Brain microvascular endothelial cell (primary cell): ENCODE measurements at regions of chr4 and their contacts with region 1.

Region 1: GRCh38 chr4:156790866-156791265 is 180.7 kb downstream of the PDGFC start:
- DNase-seq: peak; percentile 59
- H3K4me3 ChIP-seq: no peak overlapping the region
- H3K27ac ChIP-seq: no peak overlapping the region
- H3K27me3 ChIP-seq: no peaks in the 10 kb centered on the region
- CTCF ChIP-seq: no peak

Region 2: GRCh38 chr4:156628858-156629257 is 162.0 kb before region 1 on chr4:
- in situ Hi-C with region 1: no loop called
- DNase-seq: no peak
- H3K4me3 ChIP-seq: no peak overlapping the region
- H3K27ac ChIP-seq: no peak overlapping the region
- H3K27me3 ChIP-seq: no peaks in the 10 kb centered on the region
- CTCF ChIP-seq: no peak

Region 3: DNA sequence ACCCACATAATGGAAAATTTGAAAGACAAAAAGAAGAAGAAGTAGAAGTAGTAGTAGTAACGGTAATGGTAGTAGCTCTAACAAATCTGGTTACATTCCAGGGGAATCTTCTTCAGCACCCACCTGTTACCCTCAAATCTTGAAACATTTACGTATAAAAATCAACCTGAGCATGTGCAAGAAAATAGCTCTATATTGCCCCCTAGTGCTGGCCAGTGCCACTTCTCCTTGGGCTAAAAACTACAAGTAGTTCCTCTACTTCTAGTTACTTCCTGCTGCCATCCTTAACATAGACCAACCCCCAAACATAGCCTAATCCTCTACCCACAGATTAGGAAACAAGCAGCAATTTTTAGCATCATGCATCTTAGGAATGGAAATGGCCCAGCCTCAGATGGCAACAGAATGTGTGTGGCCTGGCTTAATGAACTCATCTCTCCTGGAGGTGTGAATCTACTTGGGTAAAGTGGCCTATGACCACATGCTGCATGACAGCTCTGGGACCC is 177.7 kb after region 1 on chr4:
- in situ Hi-C with region 1: loop called (anchors 25 kb)
- DNase-seq: peak; percentile 83
- H3K4me3 ChIP-seq: peak overlapping the region; percentile 92
- H3K27ac ChIP-seq: no peak overlapping the region
- H3K27me3 ChIP-seq: no peaks in the 10 kb centered on the region
- CTCF ChIP-seq: peak; percentile 89